A673 (cell line): ENCODE measurements at regions of chr5 and their contacts with region 1.

Region 1: DNA sequence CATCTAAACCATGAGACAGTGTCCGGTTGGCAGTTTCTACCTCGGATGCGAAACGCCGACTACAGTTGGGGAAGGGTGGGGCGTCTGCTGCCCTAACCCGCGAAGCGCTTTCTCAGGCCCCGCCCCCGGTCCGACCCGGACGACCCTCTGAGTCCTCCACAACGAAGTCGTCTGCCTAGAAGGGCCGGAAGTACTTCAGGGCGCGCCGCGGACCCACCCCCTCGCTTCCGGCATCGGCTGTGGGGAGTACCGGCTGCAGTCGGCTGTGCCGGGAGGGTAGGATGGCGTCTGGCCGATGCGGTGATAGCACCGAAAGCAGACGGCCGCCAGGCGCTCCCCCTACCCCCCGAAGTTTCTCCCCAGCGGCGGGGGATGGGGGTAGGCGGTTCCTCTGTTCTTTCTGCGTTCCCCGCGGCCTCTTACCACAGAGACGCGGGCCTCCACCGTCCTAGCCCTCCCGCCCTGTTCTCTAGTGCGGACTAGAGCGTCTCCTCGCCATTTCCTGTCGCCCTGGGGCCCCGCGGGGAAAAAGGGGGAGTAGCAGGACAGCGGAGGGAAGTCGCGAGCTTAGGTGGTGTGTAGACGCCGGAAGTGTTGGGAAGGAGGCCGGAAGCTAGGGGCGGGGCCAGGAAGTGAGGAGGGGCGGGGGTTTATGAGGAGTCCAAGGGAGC is at the start of gene TRIM41:
- DNase-seq: peak; percentile 98
- H3K4me3 ChIP-seq: peak within 1 kb of the TSS; percentile 83
- H3K27ac ChIP-seq: peak within 1 kb of the TSS; percentile 96
- H3K4me1 ChIP-seq: peaks cover 11% of the 10 kb centered on the region
- H3K27me3 ChIP-seq: no peaks in the 10 kb centered on the region
- CTCF ChIP-seq: no peak
- total RNA-seq, gene TRIM41: 24.2 and 24.6 TPM in 2 replicates

Region 2: GRCh38 chr5:180975338-180975737 is 247.9 kb before region 1 on chr5:
- CTCF ChIA-PET with region 1: no interaction called
- POLR2A ChIA-PET with region 1: no interaction called
- intact Hi-C with region 1: no loop called
- DNase-seq: no peak
- H3K4me3 ChIP-seq: no peak overlapping the region
- H3K27ac ChIP-seq: no peak overlapping the region
- H3K4me1 ChIP-seq: no peaks in the 10 kb centered on the region
- H3K27me3 ChIP-seq: peaks cover 32% of the 10 kb centered on the region
- CTCF ChIP-seq: no peak

Region 3: GRCh38 chr5:181243512-181244343 is 20.5 kb after region 1 on chr5 and contains the start of gene RACK1:
- CTCF ChIA-PET with region 1: no interaction called
- POLR2A ChIA-PET with region 1: interaction called, 8 read pairs
- intact Hi-C with region 1: loop called (anchors 1 kb)
- DNase-seq: peak; percentile 93
- H3K4me3 ChIP-seq: peak within 1 kb of the TSS; percentile 78
- H3K27ac ChIP-seq: peak within 1 kb of the TSS; percentile 96
- H3K4me1 ChIP-seq: peaks cover 41% of the 10 kb centered on the region
- H3K27me3 ChIP-seq: no peaks in the 10 kb centered on the region
- CTCF ChIP-seq: no peak
- total RNA-seq, gene RACK1: 1,719 and 1,726 TPM in 2 replicates